ENCODE measurements at regions of chr1 and their contacts with region 1.

Region 1: DNA sequence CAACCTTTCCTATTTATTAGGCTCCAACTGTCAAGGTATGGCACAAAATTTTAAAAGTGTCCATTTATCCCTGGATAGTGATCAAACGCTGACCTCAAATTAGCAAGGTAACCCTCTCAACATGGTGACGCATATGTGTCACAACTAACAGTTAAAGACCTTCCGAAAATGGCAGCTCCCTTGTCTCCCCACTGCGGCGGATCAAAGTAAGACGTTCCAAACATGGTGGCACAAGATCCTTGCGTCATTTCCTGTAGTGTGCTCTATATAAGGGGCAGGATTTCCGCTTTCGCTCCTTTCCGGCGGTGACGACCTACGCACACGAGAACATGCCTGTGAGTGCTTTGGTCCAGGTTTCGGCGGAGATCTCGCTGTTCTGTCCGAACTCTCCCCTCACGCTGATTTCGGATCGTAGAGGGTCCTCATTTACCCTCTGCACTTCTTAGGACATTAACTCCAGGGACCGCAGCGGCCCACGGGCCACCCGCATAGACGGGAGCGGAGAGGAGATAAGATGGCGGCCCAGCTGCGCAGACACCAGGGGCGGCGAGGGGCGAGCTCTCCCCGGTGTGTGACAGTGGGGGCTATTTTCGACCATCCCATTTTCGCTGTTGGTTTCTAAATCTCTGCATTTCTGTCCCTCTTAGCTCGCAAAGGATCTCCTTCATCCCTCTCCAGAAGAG is at the start of gene RPS27:
- DNase-seq: peak; percentile 94 to 97
- H3K4me3 ChIP-seq: peak within 1 kb of the TSS; percentile 83
- H3K4me3 Mint-ChIP-seq: peak within 1 kb of the TSS; percentile 95
- H3K27ac Mint-ChIP-seq: peak within 1 kb of the TSS; percentile 99
- H3K4me1 ChIP-seq: peaks cover 9% of the 10 kb centered on the region; the same call in 1 of the 2 replicates
- H3K4me1 Mint-ChIP-seq: peaks cover 34% of the 10 kb centered on the region
- H3K27me3 ChIP-seq: no peaks in the 10 kb centered on the region
- H3K27me3 Mint-ChIP-seq: peaks cover 3% of the 10 kb centered on the region
- CTCF ChIP-seq: no peak
- total RNA-seq, gene RPS27: 2,648 and 2,676 TPM in 2 replicates

Region 2: DNA sequence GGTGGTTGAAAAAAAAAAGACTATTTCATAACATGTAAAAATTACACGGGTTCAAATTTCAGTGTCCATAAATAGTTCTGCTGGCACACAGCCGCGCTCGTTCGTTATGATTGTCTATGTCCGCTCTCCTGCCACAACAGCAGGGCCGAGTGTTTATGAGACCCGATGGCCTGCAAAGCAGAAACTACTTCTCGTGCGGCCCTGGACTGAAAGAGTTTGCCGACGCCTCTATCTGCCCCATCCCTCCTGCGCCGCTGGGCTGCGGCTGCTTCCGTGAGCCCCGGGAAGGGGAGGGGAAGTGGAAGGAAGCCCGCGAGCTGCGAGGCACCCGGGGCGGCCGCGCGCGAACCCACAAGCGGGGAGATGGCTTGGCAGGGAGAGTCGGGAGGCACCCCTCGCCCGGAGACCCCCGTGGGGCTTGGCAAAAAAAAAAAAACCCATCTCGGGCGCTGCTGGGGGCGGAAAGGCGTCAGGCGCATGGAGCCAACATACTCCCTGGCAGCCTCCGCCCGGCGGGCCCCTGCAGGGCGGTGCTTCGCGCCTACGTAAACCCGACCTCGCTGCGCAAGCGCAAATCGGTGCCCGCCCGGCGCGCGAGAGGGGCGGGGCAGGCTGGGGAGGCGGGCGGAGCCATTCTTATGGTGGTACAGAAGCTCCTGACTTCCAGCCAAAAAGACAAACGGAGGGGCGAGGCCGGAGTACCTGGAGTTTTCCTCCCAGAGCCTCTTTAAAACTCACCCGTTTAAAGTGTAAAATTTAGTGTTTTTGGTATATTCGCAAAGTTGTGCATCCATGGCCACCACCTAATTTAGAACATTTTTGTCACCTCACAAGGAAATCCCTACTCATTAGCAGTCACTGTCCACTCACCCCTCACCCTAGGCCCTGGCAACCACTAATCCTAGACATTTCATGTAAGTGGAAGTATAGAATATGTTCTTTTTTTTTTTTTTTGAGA is 207.1 kb before region 1 on chr1:
- CTCF ChIA-PET with region 1: interaction called, 3 read pairs
- POLR2A ChIA-PET with region 1: interaction called, 4 read pairs
- intact Hi-C with region 1: loop called (anchors 5 kb)
- DNase-seq: peak; percentile 89 to 94
- H3K4me3 ChIP-seq: peak overlapping the region; percentile 48
- H3K4me3 Mint-ChIP-seq: peak overlapping the region; percentile 77
- H3K27ac Mint-ChIP-seq: peak overlapping the region; percentile 43
- H3K4me1 ChIP-seq: no peaks in the 10 kb centered on the region; the same call in 1 of the 2 replicates
- H3K4me1 Mint-ChIP-seq: peaks cover 11% of the 10 kb centered on the region
- H3K27me3 ChIP-seq: no peaks in the 10 kb centered on the region
- H3K27me3 Mint-ChIP-seq: peaks cover 2% of the 10 kb centered on the region
- CTCF ChIP-seq: no peak

Region 3: GRCh38 chr1:153816283-153816889 is 174.2 kb before region 1 on chr1:
- CTCF ChIA-PET with region 1: interaction called, 3 read pairs
- POLR2A ChIA-PET with region 1: no interaction called
- intact Hi-C with region 1: loop called (anchors 1 kb)
- DNase-seq: no peak
- H3K4me3 ChIP-seq: no peak overlapping the region
- H3K4me3 Mint-ChIP-seq: no peak overlapping the region
- H3K27ac Mint-ChIP-seq: no peak overlapping the region
- H3K4me1 ChIP-seq: no peaks in the 10 kb centered on the region
- H3K4me1 Mint-ChIP-seq: no peaks in the 10 kb centered on the region
- H3K27me3 ChIP-seq: no peaks in the 10 kb centered on the region
- H3K27me3 Mint-ChIP-seq: no peaks in the 10 kb centered on the region
- CTCF ChIP-seq: no peak

Region 4: DNA sequence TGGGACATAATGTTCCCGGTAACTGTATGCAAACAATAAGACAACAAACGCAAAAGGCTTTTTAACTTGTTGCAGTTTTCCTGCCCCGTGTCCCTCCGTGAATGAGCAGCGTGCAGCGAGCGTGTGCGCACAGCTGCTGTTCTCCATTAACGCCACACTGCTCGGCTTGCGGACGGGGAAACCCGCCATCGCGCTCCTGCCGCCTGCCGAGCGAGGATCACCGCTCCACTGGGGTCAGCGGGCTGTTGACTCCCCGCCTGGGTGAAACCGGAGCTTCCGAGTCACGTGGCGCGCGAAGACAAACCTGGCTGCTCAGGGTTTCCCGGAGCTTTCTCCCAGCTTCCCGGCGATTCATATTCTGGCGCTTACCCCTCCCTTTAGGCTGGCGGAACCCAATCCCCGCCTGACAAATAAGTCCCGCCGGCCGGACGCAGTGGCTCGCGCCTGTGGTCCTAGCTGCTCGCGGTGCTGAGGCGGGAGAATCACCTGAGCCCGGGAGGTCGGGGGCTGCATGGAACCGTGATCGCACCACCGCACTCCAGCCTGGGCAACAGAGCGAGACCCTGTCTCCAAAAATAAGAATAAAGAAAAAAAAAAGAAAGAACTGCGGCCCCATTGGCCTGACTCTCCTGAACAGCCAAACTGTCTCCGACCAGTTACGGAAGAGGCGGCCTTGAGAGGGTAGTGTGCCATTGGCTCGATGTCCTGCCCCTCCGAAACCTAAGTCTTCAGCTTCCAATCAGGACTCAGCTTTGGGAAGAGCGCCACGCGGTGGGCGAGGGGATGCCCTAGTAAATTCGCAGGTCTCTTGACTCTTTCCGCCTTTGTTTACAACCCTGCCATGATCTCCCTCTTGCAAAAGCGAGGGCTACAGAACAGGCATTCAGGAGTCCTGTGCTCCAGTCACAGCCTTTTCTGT is 23.3 kb before region 1 on chr1 and contains the start of gene CREB3L4:
- CTCF ChIA-PET with region 1: interaction called, 6 read pairs
- POLR2A ChIA-PET with region 1: interaction called, 33 read pairs
- intact Hi-C with region 1: loop called (anchors 1 kb)
- DNase-seq: peak; percentile 95 to 97
- H3K4me3 ChIP-seq: peak within 1 kb of the TSS; percentile 47
- H3K4me3 Mint-ChIP-seq: peak within 1 kb of the TSS; percentile 81
- H3K27ac Mint-ChIP-seq: peak within 1 kb of the TSS; percentile 99
- H3K4me1 ChIP-seq: peaks cover 9% of the 10 kb centered on the region; the same call in 1 of the 2 replicates
- H3K4me1 Mint-ChIP-seq: peaks cover 12% of the 10 kb centered on the region
- H3K27me3 ChIP-seq: no peaks in the 10 kb centered on the region
- H3K27me3 Mint-ChIP-seq: no peaks in the 10 kb centered on the region
- CTCF ChIP-seq: peak; percentile 42 to 49
- total RNA-seq, gene CREB3L4: 9.0 and 9.8 TPM in 2 replicates

Region 5: DNA sequence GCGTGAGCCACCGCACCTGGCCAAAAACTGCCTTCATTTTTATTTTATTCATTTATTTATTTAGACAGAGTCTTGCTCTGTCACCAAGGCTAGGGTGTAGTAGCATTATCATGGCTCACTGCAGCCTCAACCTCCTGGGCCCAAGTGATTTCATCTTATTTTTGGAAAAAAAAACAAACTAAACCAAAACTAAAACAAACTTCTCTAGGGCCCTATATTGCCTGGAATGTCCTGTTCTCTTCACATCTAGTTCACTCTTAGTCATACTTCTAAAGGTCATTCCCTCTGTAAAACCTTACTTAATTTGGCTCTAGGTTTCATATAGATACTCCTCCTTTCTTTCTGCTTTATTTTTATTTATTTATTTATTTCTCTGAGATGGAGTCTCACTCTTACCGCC is 15.5 kb after region 1 on chr1:
- CTCF ChIA-PET with region 1: interaction called, 4 read pairs
- POLR2A ChIA-PET with region 1: interaction called, 25 read pairs
- intact Hi-C with region 1: no loop called
- DNase-seq: no peak
- H3K4me3 ChIP-seq: no peak overlapping the region
- H3K4me3 Mint-ChIP-seq: no peak overlapping the region
- H3K27ac Mint-ChIP-seq: no peak overlapping the region
- H3K4me1 ChIP-seq: peaks cover 16% of the 10 kb centered on the region
- H3K4me1 Mint-ChIP-seq: peaks cover 16% of the 10 kb centered on the region
- H3K27me3 ChIP-seq: no peaks in the 10 kb centered on the region
- H3K27me3 Mint-ChIP-seq: no peaks in the 10 kb centered on the region
- CTCF ChIP-seq: no peak

Region 6: DNA sequence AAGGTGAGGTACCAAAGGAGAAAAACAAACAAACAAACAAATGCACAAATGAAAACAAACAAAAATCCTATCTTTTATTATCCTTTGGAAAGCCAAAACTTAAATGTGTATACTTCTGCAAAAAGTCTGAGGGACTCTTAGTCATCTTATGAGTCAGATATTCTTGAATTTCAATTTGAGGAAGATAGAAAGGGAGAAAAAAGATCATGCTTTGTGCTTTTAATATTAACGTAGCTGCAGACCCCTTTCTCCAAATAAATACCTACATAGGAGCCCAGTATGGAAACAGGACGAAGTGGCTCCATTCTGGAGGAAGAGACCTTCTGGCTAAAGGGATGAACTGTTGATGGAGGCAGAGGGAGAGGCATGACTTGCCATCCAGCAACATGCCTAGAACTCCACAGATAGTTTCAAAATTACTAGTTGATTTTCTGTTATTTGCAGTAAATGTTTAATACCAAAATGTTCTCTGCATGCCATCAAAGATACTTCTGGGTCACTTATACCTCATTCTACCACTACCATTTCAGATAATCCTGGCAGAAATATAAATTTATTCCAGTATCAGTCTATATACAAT is 138.9 kb after region 1 on chr1:
- CTCF ChIA-PET with region 1: no interaction called
- POLR2A ChIA-PET with region 1: no interaction called
- intact Hi-C with region 1: no loop called
- DNase-seq: no peak
- H3K4me3 ChIP-seq: no peak overlapping the region
- H3K4me3 Mint-ChIP-seq: no peak overlapping the region
- H3K27ac Mint-ChIP-seq: no peak overlapping the region
- H3K4me1 ChIP-seq: no peaks in the 10 kb centered on the region
- H3K4me1 Mint-ChIP-seq: no peaks in the 10 kb centered on the region
- H3K27me3 ChIP-seq: no peaks in the 10 kb centered on the region
- H3K27me3 Mint-ChIP-seq: peaks cover 3% of the 10 kb centered on the region
- CTCF ChIP-seq: no peak

Measured in Caco-2 (cell line).